ENCODE measurements at regions of chr13 and their contacts with region 1.

Region 1: DNA sequence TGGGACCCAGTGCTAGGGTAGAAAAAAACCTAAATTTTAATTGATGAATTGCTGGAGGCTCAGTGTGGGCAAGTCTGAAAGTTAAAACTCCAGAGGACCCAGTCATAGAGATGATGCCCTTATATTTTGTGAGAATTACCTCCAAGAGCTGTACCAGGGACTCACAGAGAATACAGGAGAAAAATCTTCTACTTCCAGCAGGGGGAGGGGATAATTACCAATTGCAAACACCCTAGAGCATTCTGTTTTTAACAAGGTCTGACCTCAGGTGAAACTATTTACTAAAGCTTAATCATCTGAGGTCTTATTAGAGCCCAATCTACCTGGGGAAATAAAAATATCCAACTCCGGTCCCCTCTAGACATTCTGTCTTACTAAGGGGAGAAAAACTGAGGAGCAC is 994.7 kb upstream of the MIR17HG start:
- DNase-seq: no peak
- ATAC-seq: no peak

Region 2: GRCh38 chr13:89082623-89083022 is 1270.1 kb before region 1 on chr13:
- intact Hi-C with region 1: loop called (anchors 5 kb)
- DNase-seq: no peak
- ATAC-seq: no peak